ENCODE measurements at regions of chr1 and their contacts with region 1.

Region 1: GRCh38 chr1:16366722-16367257 is at the start of gene SZRD1:
- DNase-seq: peak; percentile 98
- ATAC-seq: peak; percentile 89
- H3K4me3 Mint-ChIP-seq: peak within 1 kb of the TSS; percentile 97
- H3K27ac Mint-ChIP-seq: peak within 1 kb of the TSS; percentile 100
- H3K4me1 Mint-ChIP-seq: peaks cover 43% of the 10 kb centered on the region
- H3K27me3 Mint-ChIP-seq: no peaks in the 10 kb centered on the region
- total RNA-seq, gene SZRD1: 171 to 176 TPM

Region 2: GRCh38 chr1:16206547-16207317 is 160.1 kb before region 1 on chr1:
- CTCF ChIA-PET with region 1: interaction called, 15 read pairs
- POLR2A ChIA-PET with region 1: interaction called, 3 read pairs
- DNase-seq: peak; percentile 97
- ATAC-seq: peak; percentile 94
- H3K4me3 Mint-ChIP-seq: peak overlapping the region; percentile 77
- H3K27ac Mint-ChIP-seq: peak overlapping the region; percentile 98
- H3K4me1 Mint-ChIP-seq: peaks cover 11% of the 10 kb centered on the region
- H3K27me3 Mint-ChIP-seq: peaks cover under 1% of the 10 kb centered on the region

Region 3: DNA sequence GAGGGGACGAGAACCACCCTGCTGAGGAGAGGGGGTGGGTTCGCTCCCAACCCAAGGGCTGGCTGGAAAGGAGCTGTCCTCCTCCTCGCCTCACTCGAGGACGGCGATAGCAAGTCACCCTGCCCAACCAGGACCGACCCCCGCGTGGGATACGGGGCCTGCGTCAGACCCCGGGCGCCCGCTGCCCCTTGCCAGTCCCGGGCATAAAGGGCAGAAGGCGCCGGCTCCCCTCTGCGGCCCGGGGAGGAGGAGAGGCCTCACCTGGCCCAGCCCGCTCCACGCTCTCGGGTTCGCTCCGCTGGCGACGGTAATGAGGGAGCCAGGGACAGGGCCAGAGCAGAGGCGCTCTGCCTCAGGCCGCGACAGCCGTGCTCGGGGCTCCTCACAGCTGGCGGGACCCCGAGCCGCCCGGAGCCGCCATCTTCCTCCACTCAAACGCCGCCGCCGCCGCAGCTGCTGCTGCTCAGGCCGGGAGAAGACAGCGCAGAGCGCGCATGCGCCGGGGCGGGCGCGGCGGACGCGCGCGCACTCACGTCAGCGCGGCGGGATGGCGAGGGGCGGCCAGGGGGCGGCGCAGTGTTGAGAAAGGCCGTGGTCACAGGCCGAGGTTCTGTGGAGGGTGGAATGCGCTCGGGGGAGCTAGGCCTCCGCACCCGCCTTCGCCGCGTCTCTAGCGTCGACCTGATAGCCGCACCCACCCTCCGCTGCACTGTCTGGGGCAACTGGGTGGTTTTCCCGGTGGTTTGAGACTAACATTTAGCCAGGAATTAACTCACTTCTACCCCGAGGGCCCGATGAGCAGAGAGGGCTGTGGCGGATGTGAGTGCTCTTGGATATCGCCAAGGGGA is 14.6 kb before region 1 on chr1 and contains the start of gene FBXO42:
- CTCF ChIA-PET with region 1: interaction called, 120 read pairs
- POLR2A ChIA-PET with region 1: interaction called, 20 read pairs
- DNase-seq: peak; percentile 93
- ATAC-seq: peak; percentile 96
- H3K4me3 Mint-ChIP-seq: peak within 1 kb of the TSS; percentile 88
- H3K27ac Mint-ChIP-seq: peak within 1 kb of the TSS; percentile 95
- H3K4me1 Mint-ChIP-seq: peaks cover 27% of the 10 kb centered on the region
- H3K27me3 Mint-ChIP-seq: no peaks in the 10 kb centered on the region
- total RNA-seq, gene FBXO42: 19.7 to 23.4 TPM

Region 4: DNA sequence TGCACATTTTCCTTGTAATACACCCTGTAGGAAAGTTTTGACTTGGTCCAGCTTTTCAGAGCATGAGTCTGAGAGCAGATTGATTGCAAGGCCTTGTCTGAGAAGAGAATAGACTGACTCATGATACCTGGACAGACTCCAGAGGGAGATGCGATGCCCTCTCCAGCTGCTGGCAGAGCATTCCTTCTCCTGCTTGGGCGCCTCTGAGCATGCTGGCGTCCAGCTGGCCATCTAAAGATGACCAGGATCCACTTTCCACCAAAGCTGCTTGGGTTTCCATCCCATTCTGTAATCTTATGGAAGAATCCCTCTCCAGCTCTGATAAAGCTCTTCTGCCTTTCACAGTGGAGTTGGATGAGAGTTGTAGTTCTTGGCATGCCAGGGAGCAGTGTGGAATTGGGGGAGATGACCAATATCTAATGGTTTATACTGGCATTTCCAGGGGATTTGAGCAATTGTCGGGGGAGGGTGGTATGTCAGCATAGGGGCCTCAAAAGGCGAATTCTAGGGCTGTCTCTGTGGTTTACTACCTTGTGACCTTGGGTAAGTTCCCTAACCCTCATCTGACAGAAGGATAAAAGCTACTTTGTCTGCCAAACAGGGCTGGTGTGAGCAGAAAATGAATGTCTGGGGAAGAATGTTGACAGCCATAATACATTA is 19.8 kb after region 1 on chr1:
- CTCF ChIA-PET with region 1: interaction called, 5 read pairs
- POLR2A ChIA-PET with region 1: interaction called, 15 read pairs
- DNase-seq: no peak
- ATAC-seq: peak; percentile 58
- H3K4me3 Mint-ChIP-seq: peak overlapping the region; percentile 26
- H3K27ac Mint-ChIP-seq: peak overlapping the region; percentile 60
- H3K4me1 Mint-ChIP-seq: peaks cover 67% of the 10 kb centered on the region
- H3K27me3 Mint-ChIP-seq: no peaks in the 10 kb centered on the region

Region 5: GRCh38 chr1:16409536-16410152 is 42.9 kb after region 1 on chr1:
- CTCF ChIA-PET with region 1: no interaction called
- POLR2A ChIA-PET with region 1: no interaction called
- DNase-seq: no peak
- ATAC-seq: no peak
- H3K4me3 Mint-ChIP-seq: no peak overlapping the region
- H3K27ac Mint-ChIP-seq: no peak overlapping the region
- H3K4me1 Mint-ChIP-seq: no peaks in the 10 kb centered on the region
- H3K27me3 Mint-ChIP-seq: peaks cover 7% of the 10 kb centered on the region

Region 6: DNA sequence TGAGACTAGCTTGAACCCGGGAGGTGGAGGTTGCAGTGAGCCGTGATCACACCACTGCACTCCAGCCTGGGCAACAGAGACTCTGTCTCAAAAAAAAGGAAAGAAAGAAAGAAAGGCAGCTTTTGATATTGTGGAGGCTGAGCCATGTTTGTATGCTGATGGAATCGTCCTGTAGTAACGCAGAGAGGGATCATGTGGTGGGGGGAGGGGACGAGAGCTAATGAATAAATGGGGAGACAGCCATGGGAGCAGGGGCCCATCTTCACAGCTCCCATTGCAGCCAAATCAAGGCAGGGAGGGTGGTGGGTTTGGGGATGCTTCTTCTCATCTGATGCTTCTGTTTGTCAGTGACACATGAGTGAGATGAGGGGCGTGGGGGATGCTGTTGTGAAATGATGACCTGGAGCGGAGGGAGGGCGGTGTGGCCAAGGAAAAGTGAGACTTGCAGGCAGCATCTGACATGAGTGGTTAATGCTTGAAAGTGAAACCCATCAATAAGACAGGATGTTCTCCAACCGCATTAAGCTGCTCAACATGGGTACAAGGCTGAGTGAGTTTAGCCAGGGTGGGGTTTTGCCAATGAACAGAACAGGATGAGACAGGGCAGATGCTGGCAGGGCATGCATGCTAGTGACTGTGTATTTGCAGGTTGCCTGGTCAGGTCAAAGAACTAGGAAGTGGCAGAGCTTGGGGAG is 53.8 kb after region 1 on chr1:
- CTCF ChIA-PET with region 1: interaction called, 4 read pairs
- POLR2A ChIA-PET with region 1: interaction called, 11 read pairs
- DNase-seq: peak; percentile 80
- ATAC-seq: peak; percentile 96
- H3K4me3 Mint-ChIP-seq: peak overlapping the region; percentile 63
- H3K27ac Mint-ChIP-seq: peak overlapping the region; percentile 97
- H3K4me1 Mint-ChIP-seq: peaks cover 39% of the 10 kb centered on the region
- H3K27me3 Mint-ChIP-seq: no peaks in the 10 kb centered on the region